ENCODE measurements at regions of chr2 and their contacts with region 1.

Region 1: GRCh38 chr2:239369631-239370161 is 31.1 kb downstream of the HDAC4 start:
- DNase-seq: peak; percentile 40 to 95 (median 82)
- ATAC-seq: peak; percentile 93 to 98 (median 96)
- H3K4me3 ChIP-seq: peak overlapping the region in 1 of 2 donors; percentile 34
- H3K4me3 Mint-ChIP-seq: peak overlapping the region; percentile 74 to 79 (median 76)
- H3K27ac ChIP-seq: peak overlapping the region; percentile 90
- H3K27ac Mint-ChIP-seq: no peak overlapping the region
- H3K4me1 ChIP-seq: peaks cover 18 to 45% of the 10 kb centered on the region in 2 experiments
- H3K4me1 Mint-ChIP-seq: peaks cover 5 to 20% (median 5%) of the 10 kb centered on the region in 3 donors
- H3K27me3 ChIP-seq: no peaks in the 10 kb centered on the region
- H3K27me3 Mint-ChIP-seq: no peaks in the 10 kb centered on the region

Region 2: GRCh38 chr2:239129147-239129920 is 240.4 kb before region 1 on chr2:
- CTCF ChIA-PET with region 1: no interaction called
- POLR2A ChIA-PET with region 1: no interaction called
- DNase-seq: no peak
- ATAC-seq: no peak
- H3K4me3 ChIP-seq: no peak overlapping the region
- H3K4me3 Mint-ChIP-seq: no peak overlapping the region
- H3K27ac ChIP-seq: no peak overlapping the region
- H3K27ac Mint-ChIP-seq: no peak overlapping the region
- H3K4me1 ChIP-seq: no peaks in the 10 kb centered on the region
- H3K4me1 Mint-ChIP-seq: no peaks in the 10 kb centered on the region
- H3K27me3 ChIP-seq: no peaks in the 10 kb centered on the region
- H3K27me3 Mint-ChIP-seq: no peaks in the 10 kb centered on the region

Region 3: GRCh38 chr2:239380831-239381708 is 11.4 kb after region 1 on chr2:
- CTCF ChIA-PET with region 1: interaction called in 1 of 2 experiments, 11 read pairs
- POLR2A ChIA-PET with region 1: interaction called, 6 to 17 read pairs
- DNase-seq: peak in 34 of 35 experiments; percentile 50 to 88 (median 74)
- ATAC-seq: peak; percentile 87 to 93 (median 91)
- H3K4me3 ChIP-seq: peak overlapping the region; percentile 37 to 51
- H3K4me3 Mint-ChIP-seq: peak overlapping the region; percentile 73 to 82 (median 78)
- H3K27ac ChIP-seq: peak overlapping the region; percentile 57
- H3K27ac Mint-ChIP-seq: peak overlapping the region; percentile 81 to 96
- H3K4me1 ChIP-seq: peaks cover 21% of the 10 kb centered on the region in 2 experiments
- H3K4me1 Mint-ChIP-seq: peaks cover 25 to 36% (median 29%) of the 10 kb centered on the region in 3 donors
- H3K27me3 ChIP-seq: no peaks in the 10 kb centered on the region
- H3K27me3 Mint-ChIP-seq: no peaks in the 10 kb centered on the region

Region 4: GRCh38 chr2:239401067-239401880 is 31.6 kb after region 1 on chr2:
- CTCF ChIA-PET with region 1: interaction called in 1 of 2 experiments, 7 read pairs
- POLR2A ChIA-PET with region 1: interaction called in 1 of 2 experiments, 23 read pairs
- DNase-seq: peak; percentile 97 to 100 (median 99)
- ATAC-seq: peak; percentile 87 to 91 (median 90)
- H3K4me3 ChIP-seq: peak overlapping the region; percentile 90 to 97
- H3K4me3 Mint-ChIP-seq: peak overlapping the region; percentile 90 to 91 (median 90)
- H3K27ac ChIP-seq: peak overlapping the region; percentile 100
- H3K27ac Mint-ChIP-seq: peak overlapping the region; percentile 97 to 99
- H3K4me1 ChIP-seq: peaks cover 10 to 34% of the 10 kb centered on the region in 2 experiments
- H3K4me1 Mint-ChIP-seq: peaks cover 44 to 46% (median 44%) of the 10 kb centered on the region in 3 donors
- H3K27me3 ChIP-seq: no peaks in the 10 kb centered on the region
- H3K27me3 Mint-ChIP-seq: no peaks in the 10 kb centered on the region

Measured in T-cell (primary cell).